CD4-positive, alpha-beta memory T cell (primary cell): ENCODE measurements at regions of chr15 and their contacts with region 1.

Region 1: DNA sequence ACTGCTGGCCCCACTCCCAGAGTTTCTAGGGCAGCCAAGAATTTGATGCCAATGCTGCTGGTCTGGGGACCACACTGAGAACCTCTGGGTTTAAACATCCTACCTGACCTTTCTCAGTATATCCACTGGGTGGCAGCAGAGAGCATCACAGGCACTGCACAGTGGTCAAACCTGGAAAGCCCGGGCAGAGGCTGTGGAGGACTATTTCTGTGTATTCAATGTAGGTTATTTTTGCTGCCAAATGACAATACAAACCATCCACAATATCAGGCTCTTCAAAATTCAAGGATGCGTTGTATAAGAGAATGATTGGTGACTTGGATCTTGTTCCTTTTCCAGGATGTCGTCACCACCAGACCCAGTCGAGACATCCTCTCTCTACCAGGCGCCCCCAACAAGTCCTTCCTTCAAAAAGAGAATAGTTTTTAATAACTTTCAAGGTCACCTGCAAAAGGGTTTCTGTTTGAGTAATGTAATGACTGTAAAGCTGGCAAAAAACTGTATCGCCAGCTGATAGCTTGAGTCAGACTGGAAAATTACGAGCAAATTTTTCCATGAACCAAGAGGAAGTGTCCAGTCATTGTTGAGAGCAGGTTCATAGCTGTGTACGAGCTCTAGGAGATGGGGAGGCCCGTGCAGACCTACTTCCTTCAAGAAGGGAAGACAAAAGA is 30.5 kb upstream of the MYZAP start:
- DNase-seq: peak; percentile 60 to 65 (median 62)
- H3K4me3 ChIP-seq: no peak overlapping the region
- H3K4me3 Mint-ChIP-seq: peak overlapping the region in 7 of 8 donors; percentile 14 to 64 (median 55)
- H3K27ac ChIP-seq: no peak overlapping the region
- H3K27ac Mint-ChIP-seq: peak overlapping the region in 4 of 7 donors; percentile 11 to 59 (median 38)
- H3K4me1 ChIP-seq: peaks cover 24% of the 10 kb centered on the region
- H3K4me1 Mint-ChIP-seq: peaks cover 25 to 43% (median 32%) of the 10 kb centered on the region in 4 donors
- H3K27me3 ChIP-seq: no peaks in the 10 kb centered on the region
- H3K27me3 Mint-ChIP-seq: peaks cover 0 to 1% of the 10 kb centered on the region in 2 donors

Region 2: GRCh38 chr15:57031605-57032004 is 529.6 kb before region 1 on chr15:
- CTCF ChIA-PET with region 1: no interaction called
- POLR2A ChIA-PET with region 1: no interaction called
- intact Hi-C with region 1: no loop called
- DNase-seq: no peak
- H3K4me3 ChIP-seq: no peak overlapping the region
- H3K4me3 Mint-ChIP-seq: no peak overlapping the region
- H3K27ac ChIP-seq: no peak overlapping the region
- H3K27ac Mint-ChIP-seq: peak overlapping the region in 2 of 7 donors; percentile 32 to 48
- H3K4me1 ChIP-seq: peaks cover 12% of the 10 kb centered on the region
- H3K4me1 Mint-ChIP-seq: peaks cover 24 to 51% (median 41%) of the 10 kb centered on the region in 4 donors
- H3K27me3 ChIP-seq: no peaks in the 10 kb centered on the region
- H3K27me3 Mint-ChIP-seq: no peaks in the 10 kb centered on the region

Region 3: GRCh38 chr15:57586661-57587424 is 25.7 kb after region 1 on chr15:
- CTCF ChIA-PET with region 1: interaction called, 13 read pairs
- POLR2A ChIA-PET with region 1: interaction called, 3 read pairs
- intact Hi-C with region 1: no loop called
- DNase-seq: peak in 4 of 5 donors; percentile 19 to 43 (median 36)
- H3K4me3 ChIP-seq: no peak overlapping the region
- H3K4me3 Mint-ChIP-seq: peak overlapping the region in 4 of 8 donors; percentile 25 to 75 (median 42)
- H3K27ac ChIP-seq: no peak overlapping the region
- H3K27ac Mint-ChIP-seq: peak overlapping the region; percentile 34 to 90 (median 78)
- H3K4me1 ChIP-seq: peaks cover 29% of the 10 kb centered on the region
- H3K4me1 Mint-ChIP-seq: peaks cover 16 to 31% (median 24%) of the 10 kb centered on the region in 4 donors
- H3K27me3 ChIP-seq: no peaks in the 10 kb centered on the region
- H3K27me3 Mint-ChIP-seq: peaks cover 16 to 19% of the 10 kb centered on the region in 2 donors

Region 4: DNA sequence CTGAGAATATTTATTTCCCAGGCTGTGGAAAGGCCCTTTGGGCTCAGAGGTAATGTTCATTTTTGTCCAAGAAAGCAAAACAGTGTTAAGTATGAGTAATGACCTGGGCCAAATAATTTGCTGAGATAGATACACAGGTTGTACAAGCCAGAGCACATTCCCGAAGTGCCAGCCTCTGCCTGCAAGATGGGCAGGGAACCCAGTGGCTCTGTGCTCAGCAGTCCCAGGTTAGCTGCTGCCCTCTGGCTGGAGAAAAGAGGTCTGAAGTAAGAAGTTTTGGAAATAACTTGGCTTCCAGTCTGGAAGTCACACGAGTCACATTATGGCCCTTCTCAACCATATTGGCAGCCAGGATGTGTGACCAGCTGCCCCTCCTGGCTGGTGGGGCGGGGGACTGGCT is 50.8 kb after region 1 on chr15:
- CTCF ChIA-PET with region 1: interaction called, 3 read pairs
- POLR2A ChIA-PET with region 1: no interaction called
- intact Hi-C with region 1: loop called (anchors 1 kb)
- DNase-seq: no peak
- H3K4me3 ChIP-seq: no peak overlapping the region
- H3K4me3 Mint-ChIP-seq: no peak overlapping the region
- H3K27ac ChIP-seq: no peak overlapping the region
- H3K27ac Mint-ChIP-seq: no peak overlapping the region
- H3K4me1 ChIP-seq: no peaks in the 10 kb centered on the region
- H3K4me1 Mint-ChIP-seq: no peaks in the 10 kb centered on the region
- H3K27me3 ChIP-seq: no peaks in the 10 kb centered on the region
- H3K27me3 Mint-ChIP-seq: no peaks in the 10 kb centered on the region

Region 5: GRCh38 chr15:57640935-57641682 is 79.9 kb after region 1 on chr15:
- CTCF ChIA-PET with region 1: interaction called, 5 read pairs
- POLR2A ChIA-PET with region 1: no interaction called
- intact Hi-C with region 1: loop called (anchors 1 kb)
- DNase-seq: peak in 2 of 5 donors; percentile 4 to 15
- H3K4me3 ChIP-seq: no peak overlapping the region
- H3K4me3 Mint-ChIP-seq: no peak overlapping the region
- H3K27ac ChIP-seq: no peak overlapping the region
- H3K27ac Mint-ChIP-seq: no peak overlapping the region
- H3K4me1 ChIP-seq: no peaks in the 10 kb centered on the region
- H3K4me1 Mint-ChIP-seq: peaks cover 2 to 9% (median 6%) of the 10 kb centered on the region in 4 donors
- H3K27me3 ChIP-seq: no peaks in the 10 kb centered on the region
- H3K27me3 Mint-ChIP-seq: peaks cover 1 to 5% of the 10 kb centered on the region in 2 donors

Region 6: DNA sequence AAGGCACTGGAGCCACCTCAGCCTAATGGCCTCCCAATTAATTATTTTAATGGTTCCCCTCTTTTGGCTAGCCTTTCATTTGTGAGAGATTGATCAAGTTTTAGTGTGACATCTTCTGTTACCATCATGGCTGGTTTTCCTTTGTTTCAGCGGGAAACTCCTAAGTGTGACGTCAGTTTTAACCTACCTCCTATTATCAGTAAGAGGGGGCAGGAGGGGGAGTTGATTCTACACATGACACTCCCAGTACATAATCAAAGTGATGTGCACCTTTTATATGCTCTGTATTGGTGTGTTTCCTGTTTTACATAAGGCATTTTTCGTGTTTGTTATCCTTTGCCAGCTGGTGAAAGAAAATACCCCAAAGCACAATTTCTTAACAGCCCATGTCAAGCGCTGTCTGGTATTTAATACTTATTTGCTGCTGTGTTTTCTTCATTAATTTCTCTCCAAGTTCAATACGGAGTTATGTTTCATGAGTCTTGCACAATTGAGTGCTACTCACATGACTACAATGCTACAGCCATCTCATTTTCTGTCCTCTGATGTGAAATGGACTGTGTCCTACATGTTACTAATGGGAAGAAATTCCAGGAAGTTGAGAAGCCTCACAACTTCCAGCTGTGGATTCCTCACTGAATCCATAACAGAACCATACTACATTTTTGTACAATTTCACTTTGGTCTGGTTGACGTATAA is 93.1 kb after region 1 on chr15:
- CTCF ChIA-PET with region 1: interaction called, 11 read pairs
- POLR2A ChIA-PET with region 1: interaction called, 3 read pairs
- intact Hi-C with region 1: loop called (anchors 5 kb)
- DNase-seq: no peak
- H3K4me3 ChIP-seq: no peak overlapping the region
- H3K4me3 Mint-ChIP-seq: no peak overlapping the region
- H3K27ac ChIP-seq: no peak overlapping the region
- H3K27ac Mint-ChIP-seq: no peak overlapping the region
- H3K4me1 ChIP-seq: no peaks in the 10 kb centered on the region
- H3K4me1 Mint-ChIP-seq: peaks cover 0 to 2% (median under 1%) of the 10 kb centered on the region in 4 donors
- H3K27me3 ChIP-seq: no peaks in the 10 kb centered on the region
- H3K27me3 Mint-ChIP-seq: peaks cover 6 to 9% of the 10 kb centered on the region in 2 donors

Region 7: DNA sequence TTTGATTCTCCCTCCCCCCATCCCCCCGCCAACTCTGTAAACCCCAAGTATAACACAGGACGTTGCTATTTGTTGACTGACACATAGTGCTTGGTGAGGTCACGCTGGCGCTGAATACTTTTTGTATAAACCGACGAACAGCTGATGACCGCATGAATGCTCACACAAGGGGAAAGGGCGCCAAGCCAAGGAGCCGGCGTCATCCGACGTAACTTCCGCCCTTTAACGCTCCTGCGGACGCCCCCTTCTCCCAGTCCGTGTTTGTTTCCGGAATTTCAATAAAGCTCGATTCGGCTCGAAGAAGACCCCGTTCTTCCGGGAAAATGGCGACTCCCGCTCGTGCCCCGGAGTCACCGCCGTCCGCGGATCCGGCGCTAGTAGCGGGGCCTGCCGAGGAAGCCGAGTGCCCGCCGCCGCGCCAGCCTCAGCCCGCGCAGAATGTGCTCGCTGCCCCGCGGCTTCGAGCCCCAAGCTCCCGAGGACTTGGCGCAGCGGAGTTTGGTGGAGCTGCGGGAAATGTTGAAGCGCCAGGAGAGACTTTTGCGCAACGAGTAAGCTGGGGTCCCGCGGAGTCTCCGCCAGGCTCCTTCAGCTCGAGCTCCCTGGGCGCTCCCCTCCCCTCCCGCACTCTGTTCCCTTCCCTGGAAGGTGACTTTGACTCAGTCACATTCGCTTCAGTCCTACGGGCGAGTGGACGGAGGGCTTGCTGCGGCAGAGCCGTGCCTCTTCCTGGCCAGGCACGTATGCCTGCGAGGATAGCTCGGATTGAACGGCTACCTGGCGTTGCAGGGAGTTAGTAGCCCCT is 145.4 kb after region 1 on chr15 and contains the start of gene POLR2M:
- CTCF ChIA-PET with region 1: interaction called, 7 read pairs
- POLR2A ChIA-PET with region 1: no interaction called
- intact Hi-C with region 1: loop called (anchors 2 kb)
- DNase-seq: peak; percentile 90 to 97 (median 93)
- H3K4me3 ChIP-seq: peak within 1 kb of the TSS; percentile 77 to 94
- H3K4me3 Mint-ChIP-seq: peak within 1 kb of the TSS; percentile 87 to 93 (median 90)
- H3K27ac ChIP-seq: peak within 1 kb of the TSS; percentile 84
- H3K27ac Mint-ChIP-seq: peak within 1 kb of the TSS; percentile 84 to 98 (median 97)
- H3K4me1 ChIP-seq: peaks cover 65% of the 10 kb centered on the region
- H3K4me1 Mint-ChIP-seq: peaks cover 51 to 88% (median 75%) of the 10 kb centered on the region in 4 donors
- H3K27me3 ChIP-seq: no peaks in the 10 kb centered on the region
- H3K27me3 Mint-ChIP-seq: no peaks in the 10 kb centered on the region
- total RNA-seq, gene POLR2M: 86.5 to 97.3 TPM

Region 8: DNA sequence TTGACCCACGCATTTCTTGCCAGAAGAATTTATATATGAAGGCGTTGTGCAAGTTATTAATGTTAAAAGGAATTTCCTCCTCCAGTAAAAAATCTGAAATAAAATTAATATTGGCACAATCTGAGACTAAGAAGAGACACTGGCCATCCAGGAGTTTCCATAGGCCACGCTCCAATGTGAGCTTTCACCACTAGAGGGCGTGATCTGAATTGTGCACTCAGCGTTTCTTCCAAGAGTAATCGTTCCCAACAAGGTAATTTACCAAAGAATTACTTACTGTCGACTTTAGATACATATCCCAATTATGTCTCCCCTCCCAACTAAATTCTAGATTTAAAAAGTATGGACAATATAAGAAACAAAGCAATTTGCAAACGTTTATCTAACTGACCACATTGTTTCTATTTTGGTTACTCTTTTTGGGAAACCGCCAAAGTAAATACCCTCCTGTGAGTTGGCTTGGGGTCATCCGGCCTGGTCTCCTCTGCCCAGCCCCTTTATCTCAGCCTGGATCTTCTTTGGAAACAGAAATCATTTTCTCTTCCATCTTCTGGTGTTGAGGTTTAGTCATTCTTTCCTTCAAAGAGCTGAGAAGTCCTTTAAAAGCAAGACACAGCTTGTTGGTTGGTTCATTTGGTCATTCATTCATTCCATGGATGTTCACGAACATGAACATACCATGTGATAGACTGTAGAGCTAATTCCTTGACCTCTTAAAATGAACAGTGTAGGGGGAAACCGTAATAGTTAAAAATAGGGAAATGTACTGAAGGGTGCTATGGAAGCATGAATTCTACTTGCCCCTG is 171.6 kb after region 1 on chr15:
- CTCF ChIA-PET with region 1: no interaction called
- POLR2A ChIA-PET with region 1: no interaction called
- intact Hi-C with region 1: loop called (anchors 1 kb)
- DNase-seq: peak in 4 of 5 donors; percentile 14 to 29 (median 24)
- H3K4me3 ChIP-seq: no peak overlapping the region
- H3K4me3 Mint-ChIP-seq: no peak overlapping the region
- H3K27ac ChIP-seq: no peak overlapping the region
- H3K27ac Mint-ChIP-seq: peak overlapping the region in 1 of 7 donors; percentile 4
- H3K4me1 ChIP-seq: no peaks in the 10 kb centered on the region
- H3K4me1 Mint-ChIP-seq: peaks cover 0 to 7% (median 3%) of the 10 kb centered on the region in 4 donors
- H3K27me3 ChIP-seq: no peaks in the 10 kb centered on the region
- H3K27me3 Mint-ChIP-seq: no peaks in the 10 kb centered on the region